Astrocyte of the cerebellum (primary cell): ENCODE measurements at regions of chr5 and their contacts with region 1.

Region 1: GRCh38 chr5:172334196-172334595 is 50.6 kb upstream of the UBTD2 start:
- DNase-seq: no peak
- H3K4me3 ChIP-seq: no peak overlapping the region
- CTCF ChIP-seq: peak; percentile 2

Region 2: GRCh38 chr5:172293054-172293744 is 41.0 kb before region 1 on chr5:
- in situ Hi-C with region 1: no loop called
- DNase-seq: peak; percentile 47
- H3K4me3 ChIP-seq: no peak overlapping the region
- CTCF ChIP-seq: peak; percentile 86

Region 3: DNA sequence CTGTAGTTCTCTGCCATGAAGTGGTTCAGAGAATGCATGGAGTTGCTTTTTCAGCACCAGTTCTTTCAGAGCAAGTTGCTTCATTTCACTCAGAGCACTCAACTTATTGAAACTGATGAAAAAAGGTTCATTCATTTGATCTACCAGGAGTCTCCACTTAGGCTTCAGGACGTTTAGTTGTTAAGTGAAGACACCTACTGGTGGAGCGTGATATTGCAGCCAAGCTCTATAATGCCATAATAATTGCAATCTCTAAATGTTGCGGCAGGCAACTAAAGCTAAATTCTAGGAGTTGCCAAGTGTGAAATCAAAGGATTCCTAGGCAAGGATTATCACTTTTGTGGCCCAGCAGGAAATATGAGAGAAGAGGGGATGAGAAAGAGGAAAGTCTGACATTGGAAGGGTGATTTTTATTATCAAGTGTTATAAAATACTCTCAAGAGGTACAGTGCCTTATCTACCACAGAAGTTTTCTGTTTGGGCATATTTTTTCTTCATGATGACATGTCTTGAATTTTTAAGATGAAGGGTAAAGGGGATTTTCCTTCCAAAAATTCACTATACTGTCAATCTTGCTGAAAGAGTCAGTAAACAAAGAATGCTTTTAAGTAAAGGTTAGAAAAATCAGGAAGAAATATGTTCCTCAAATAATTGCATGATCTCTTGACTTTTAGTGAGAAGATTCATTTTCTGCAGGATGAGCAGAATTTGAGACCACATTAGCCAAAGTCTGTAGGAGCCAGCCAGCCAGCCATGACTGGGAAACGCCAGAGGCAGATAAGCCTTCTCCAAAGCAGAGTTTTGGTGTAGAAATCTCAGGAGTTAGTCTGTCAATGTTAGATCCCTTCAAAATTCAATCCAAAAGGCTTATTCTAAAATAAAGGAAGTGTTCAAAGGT is 36.7 kb after region 1 on chr5:
- in situ Hi-C with region 1: loop called (anchors 5 kb)
- DNase-seq: no peak
- H3K4me3 ChIP-seq: no peak overlapping the region
- CTCF ChIP-seq: peak; percentile 69